ENCODE measurements at regions of chr3 and their contacts with region 1.

Region 1: GRCh38 chr3:24365194-24365612 is 129.4 kb downstream of the THRB start:
- DNase-seq: peak; percentile 46 to 76 (median 50)
- ATAC-seq: peak; percentile 96
- H3K4me3 ChIP-seq: no peak overlapping the region
- H3K4me1 ChIP-seq: peaks cover 31% of the 10 kb centered on the region
- CTCF ChIP-seq: no peak

Region 2: DNA sequence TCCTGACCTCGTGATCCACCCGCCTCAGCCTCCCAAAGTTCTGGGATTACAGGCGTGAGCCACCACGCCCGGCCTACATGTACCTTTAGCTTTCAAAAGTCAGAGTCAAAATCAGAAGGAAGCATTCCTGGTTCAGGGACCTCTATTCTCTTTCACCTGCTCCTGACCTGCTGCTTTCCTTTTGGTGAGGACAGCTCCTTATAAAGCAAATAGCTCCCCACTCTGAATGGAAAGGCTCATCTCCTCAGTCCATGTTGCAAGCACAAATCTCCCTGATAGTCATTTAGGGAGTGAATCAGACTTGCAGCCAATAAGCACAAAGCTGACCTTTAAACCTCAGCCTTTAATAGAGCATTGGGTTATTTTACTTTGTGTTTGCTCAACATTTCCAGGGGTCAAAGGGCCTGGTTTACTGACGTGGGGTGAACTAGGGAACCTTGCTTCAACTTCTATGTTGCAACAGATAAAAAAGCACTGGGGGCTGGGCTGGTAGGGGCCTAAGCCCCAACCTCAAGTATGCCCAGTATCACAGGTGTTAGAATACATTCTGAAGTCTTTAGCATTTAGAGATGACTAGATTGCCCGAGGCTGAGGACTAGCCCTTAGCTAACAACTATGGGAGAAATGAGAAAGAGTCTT is 86.4 kb after region 1 on chr3:
- intact Hi-C with region 1: loop called in 1 of 2 experiments (anchors 5 kb)
- DNase-seq: peak in 2 of 3 donors; percentile 43 to 77
- ATAC-seq: peak; percentile 91
- H3K4me3 ChIP-seq: no peak overlapping the region
- H3K4me1 ChIP-seq: peaks cover 26% of the 10 kb centered on the region
- CTCF ChIP-seq: no peak